ENCODE measurements at regions of chr1 and their contacts with region 1.

Region 1: GRCh38 chr1:27979151-27979858 is 19.5 kb downstream of the XKR8 start:
- DNase-seq: peak in 2 of 5 donors; percentile 44 to 50
- H3K4me3 ChIP-seq: no peak overlapping the region
- H3K4me3 Mint-ChIP-seq: no peak overlapping the region
- H3K27ac ChIP-seq: peak overlapping the region; percentile 5
- H3K27ac Mint-ChIP-seq: no peak overlapping the region
- H3K4me1 ChIP-seq: no peaks in the 10 kb centered on the region
- H3K4me1 Mint-ChIP-seq: no peaks in the 10 kb centered on the region
- H3K27me3 ChIP-seq: no peaks in the 10 kb centered on the region
- H3K27me3 Mint-ChIP-seq: no peaks in the 10 kb centered on the region

Region 2: DNA sequence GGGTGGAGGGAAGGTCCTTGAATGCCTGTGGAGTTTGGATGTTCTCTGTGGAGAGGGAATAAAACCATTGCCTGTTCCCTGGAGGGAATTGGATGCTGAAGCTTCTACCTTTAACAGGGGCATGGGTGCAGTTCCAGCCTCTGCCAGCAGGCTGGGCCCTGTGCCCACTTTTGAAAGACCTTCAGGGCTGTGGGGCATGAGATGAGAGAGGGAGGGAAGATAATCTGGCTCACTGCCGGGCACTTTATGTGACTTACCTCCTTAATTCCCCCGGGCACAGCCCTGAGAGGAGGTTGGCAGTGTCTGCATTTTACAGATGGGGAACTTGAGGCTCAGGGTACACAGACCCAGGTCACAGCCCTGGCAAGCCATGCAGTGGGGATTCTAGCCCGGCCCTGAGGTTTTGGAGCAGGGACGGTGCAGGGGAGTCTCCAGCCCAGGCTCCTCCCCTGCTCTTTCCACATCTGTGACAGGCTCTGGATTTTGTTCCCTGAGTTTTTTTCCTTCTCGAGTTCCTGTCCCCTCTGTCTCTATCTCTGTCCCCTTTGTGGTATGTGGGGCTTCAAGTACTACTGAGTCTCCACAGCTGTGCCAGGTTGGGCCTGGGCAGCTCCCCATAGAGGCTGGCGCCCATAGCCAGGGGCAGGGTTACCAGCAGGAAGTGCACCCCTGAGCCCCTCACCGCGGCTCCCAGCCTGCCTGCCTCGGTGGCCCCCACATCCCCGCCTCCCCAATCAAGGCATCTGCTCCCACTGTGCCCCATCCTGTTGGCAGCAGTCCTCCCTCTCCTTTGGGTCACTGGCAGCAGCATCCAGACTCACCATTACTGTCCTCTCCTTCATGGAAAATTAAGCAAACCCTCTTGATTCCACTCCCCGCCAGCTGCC is 121.0 kb before region 1 on chr1:
- CTCF ChIA-PET with region 1: interaction called, 28 read pairs
- POLR2A ChIA-PET with region 1: no interaction called
- DNase-seq: peak; percentile 71 to 88 (median 76)
- H3K4me3 ChIP-seq: no peak overlapping the region
- H3K4me3 Mint-ChIP-seq: no peak overlapping the region
- H3K27ac ChIP-seq: no peak overlapping the region
- H3K27ac Mint-ChIP-seq: peak overlapping the region in 2 of 8 donors; percentile 23 to 25
- H3K4me1 ChIP-seq: peaks cover 10% of the 10 kb centered on the region
- H3K4me1 Mint-ChIP-seq: peaks cover 6 to 18% (median 8%) of the 10 kb centered on the region in 3 donors
- H3K27me3 ChIP-seq: no peaks in the 10 kb centered on the region
- H3K27me3 Mint-ChIP-seq: no peaks in the 10 kb centered on the region

Region 3: GRCh38 chr1:27940297-27940696 is 39.0 kb before region 1 on chr1:
- CTCF ChIA-PET with region 1: interaction called, 19 read pairs
- POLR2A ChIA-PET with region 1: no interaction called
- DNase-seq: peak; percentile 51 to 79 (median 58)
- H3K4me3 ChIP-seq: no peak overlapping the region
- H3K4me3 Mint-ChIP-seq: no peak overlapping the region
- H3K27ac ChIP-seq: no peak overlapping the region
- H3K27ac Mint-ChIP-seq: peak overlapping the region; percentile 24 to 87 (median 70)
- H3K4me1 ChIP-seq: peaks cover 33% of the 10 kb centered on the region
- H3K4me1 Mint-ChIP-seq: peaks cover 26 to 43% (median 31%) of the 10 kb centered on the region in 3 donors
- H3K27me3 ChIP-seq: no peaks in the 10 kb centered on the region
- H3K27me3 Mint-ChIP-seq: peaks cover 0 to 5% of the 10 kb centered on the region in 2 donors

Region 4: GRCh38 chr1:27952147-27952546 is 27.2 kb before region 1 on chr1:
- CTCF ChIA-PET with region 1: no interaction called
- POLR2A ChIA-PET with region 1: no interaction called
- DNase-seq: no peak
- H3K4me3 ChIP-seq: no peak overlapping the region
- H3K4me3 Mint-ChIP-seq: no peak overlapping the region
- H3K27ac ChIP-seq: no peak overlapping the region
- H3K27ac Mint-ChIP-seq: no peak overlapping the region
- H3K4me1 ChIP-seq: no peaks in the 10 kb centered on the region
- H3K4me1 Mint-ChIP-seq: no peaks in the 10 kb centered on the region
- H3K27me3 ChIP-seq: no peaks in the 10 kb centered on the region
- H3K27me3 Mint-ChIP-seq: peaks cover 6 to 8% of the 10 kb centered on the region in 2 donors

Region 5: GRCh38 chr1:28115267-28115666 is 136.0 kb after region 1 on chr1:
- CTCF ChIA-PET with region 1: no interaction called
- POLR2A ChIA-PET with region 1: no interaction called
- DNase-seq: peak in 4 of 5 donors; percentile 5 to 48 (median 31)
- H3K4me3 ChIP-seq: no peak overlapping the region
- H3K4me3 Mint-ChIP-seq: peak overlapping the region in 4 of 7 donors; percentile 4 to 44 (median 28)
- H3K27ac ChIP-seq: no peak overlapping the region
- H3K27ac Mint-ChIP-seq: peak overlapping the region in 5 of 8 donors; percentile 12 to 75 (median 38)
- H3K4me1 ChIP-seq: peaks cover 10% of the 10 kb centered on the region
- H3K4me1 Mint-ChIP-seq: peaks cover 6 to 10% (median 8%) of the 10 kb centered on the region in 3 donors
- H3K27me3 ChIP-seq: no peaks in the 10 kb centered on the region
- H3K27me3 Mint-ChIP-seq: peaks cover 0 to 4% of the 10 kb centered on the region in 2 donors

Measured in CD8-positive, alpha-beta memory T cell (primary cell).